Activated CD4-positive, alpha-beta memory T cell treated with anti-CD3 and anti-CD28 coated beads, Interleukin-2, amount 10 ng/mL, durations not matched to agents 7 days and 5 days (primary cell): ENCODE measurements at regions of chr14 and their contacts with region 1.

Region 1: GRCh38 chr14:91350813-91351511 is 66.7 kb downstream of the CCDC88C start:
- DNase-seq: peak; percentile 76
- H3K4me3 Mint-ChIP-seq: peak overlapping the region; percentile 71
- H3K27ac Mint-ChIP-seq: peak overlapping the region; percentile 96
- H3K4me1 Mint-ChIP-seq: peaks cover 90% of the 10 kb centered on the region
- H3K27me3 Mint-ChIP-seq: no peaks in the 10 kb centered on the region

Region 2: DNA sequence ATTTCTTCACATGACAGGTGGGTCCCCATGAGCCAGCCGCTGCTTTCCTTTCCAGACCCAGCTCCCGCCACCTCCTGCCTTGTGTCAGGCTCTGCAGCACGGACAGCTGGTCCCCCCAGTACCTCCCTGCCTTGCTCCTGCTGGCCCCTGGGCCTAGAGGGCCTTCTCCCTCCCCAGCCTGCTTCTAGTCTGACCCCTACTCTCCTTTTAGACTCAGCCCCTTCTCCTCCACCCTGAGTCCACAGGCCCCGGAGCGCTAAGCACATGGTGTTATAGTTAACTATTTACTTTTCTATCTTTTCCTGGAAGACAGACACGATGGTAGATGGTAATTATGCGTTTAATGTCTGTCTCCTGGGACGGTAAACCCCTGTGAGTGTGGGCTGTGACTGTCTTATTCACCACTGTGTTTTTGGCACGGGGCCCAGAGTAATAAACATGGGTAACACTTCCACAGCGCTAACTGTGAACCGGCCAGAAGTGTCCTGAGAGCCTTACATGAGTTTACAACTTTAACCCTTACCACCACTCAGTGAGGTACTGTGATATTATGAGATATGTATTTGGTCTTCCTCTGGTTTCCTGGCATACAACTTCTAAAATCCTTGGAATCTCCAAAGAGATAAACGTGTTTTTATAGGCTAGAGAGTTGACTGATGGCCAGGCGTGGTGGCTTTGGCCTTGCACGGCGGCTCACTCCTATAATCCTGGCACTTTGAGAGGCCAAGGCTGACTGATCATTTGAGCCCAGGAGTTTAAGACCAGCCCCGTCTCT is 195.9 kb before region 1 on chr14:
- CTCF ChIA-PET with region 1: no interaction called
- POLR2A ChIA-PET with region 1: no interaction called
- DNase-seq: no peak
- H3K4me3 Mint-ChIP-seq: no peak overlapping the region
- H3K27ac Mint-ChIP-seq: no peak overlapping the region
- H3K4me1 Mint-ChIP-seq: peaks cover 12% of the 10 kb centered on the region
- H3K27me3 Mint-ChIP-seq: no peaks in the 10 kb centered on the region

Region 3: GRCh38 chr14:91317381-91318308 is 33.3 kb before region 1 on chr14:
- CTCF ChIA-PET with region 1: interaction called, 8 read pairs
- POLR2A ChIA-PET with region 1: interaction called, 38 read pairs
- DNase-seq: peak; percentile 86
- H3K4me3 Mint-ChIP-seq: peak overlapping the region; percentile 46
- H3K27ac Mint-ChIP-seq: peak overlapping the region; percentile 95
- H3K4me1 Mint-ChIP-seq: peaks cover 83% of the 10 kb centered on the region
- H3K27me3 Mint-ChIP-seq: no peaks in the 10 kb centered on the region

Region 4: GRCh38 chr14:91332151-91332985 is 18.6 kb before region 1 on chr14:
- CTCF ChIA-PET with region 1: interaction called, 6 read pairs
- POLR2A ChIA-PET with region 1: interaction called, 12 read pairs
- DNase-seq: no peak
- H3K4me3 Mint-ChIP-seq: no peak overlapping the region
- H3K27ac Mint-ChIP-seq: peak overlapping the region; percentile 72
- H3K4me1 Mint-ChIP-seq: peaks cover 45% of the 10 kb centered on the region
- H3K27me3 Mint-ChIP-seq: no peaks in the 10 kb centered on the region

Region 5: GRCh38 chr14:91373591-91374254 is 22.8 kb after region 1 on chr14:
- CTCF ChIA-PET with region 1: interaction called, 12 read pairs
- POLR2A ChIA-PET with region 1: interaction called, 75 read pairs
- DNase-seq: peak; percentile 69
- H3K4me3 Mint-ChIP-seq: peak overlapping the region; percentile 71
- H3K27ac Mint-ChIP-seq: peak overlapping the region; percentile 94
- H3K4me1 Mint-ChIP-seq: peaks cover 99% of the 10 kb centered on the region
- H3K27me3 Mint-ChIP-seq: no peaks in the 10 kb centered on the region

Region 6: GRCh38 chr14:91410771-91411536 is 60.0 kb after region 1 on chr14:
- CTCF ChIA-PET with region 1: interaction called, 16 read pairs
- POLR2A ChIA-PET with region 1: interaction called, 77 read pairs
- DNase-seq: peak; percentile 41
- H3K4me3 Mint-ChIP-seq: peak overlapping the region; percentile 69
- H3K27ac Mint-ChIP-seq: peak overlapping the region; percentile 92
- H3K4me1 Mint-ChIP-seq: peaks cover 89% of the 10 kb centered on the region
- H3K27me3 Mint-ChIP-seq: no peaks in the 10 kb centered on the region